OCI-LY7 (cell line): ENCODE measurements at regions of chr7 and their contacts with region 1.

Region 1: GRCh38 chr7:75688200-75689136 is 50.3 kb downstream of the HIP1 start:
- DNase-seq: peak; percentile 90
- H3K4me3 ChIP-seq: peak overlapping the region; percentile 60
- H3K27ac ChIP-seq: peak overlapping the region; percentile 92
- H3K4me1 ChIP-seq: peaks cover 72% of the 10 kb centered on the region
- CTCF ChIP-seq: no peak

Region 2: GRCh38 chr7:75559355-75559975 is 129.0 kb before region 1 on chr7:
- CTCF ChIA-PET with region 1: no interaction called
- POLR2A ChIA-PET with region 1: no interaction called
- intact Hi-C with region 1: no loop called
- DNase-seq: no peak
- H3K4me3 ChIP-seq: no peak overlapping the region
- H3K27ac ChIP-seq: no peak overlapping the region
- H3K4me1 ChIP-seq: no peaks in the 10 kb centered on the region
- CTCF ChIP-seq: no peak

Region 3: GRCh38 chr7:75624134-75624832 is 64.2 kb before region 1 on chr7:
- CTCF ChIA-PET with region 1: no interaction called
- POLR2A ChIA-PET with region 1: interaction called, 6 read pairs
- intact Hi-C with region 1: loop called (anchors 5 kb)
- DNase-seq: peak; percentile 42
- H3K4me3 ChIP-seq: no peak overlapping the region
- H3K27ac ChIP-seq: no peak overlapping the region
- H3K4me1 ChIP-seq: peaks cover 42% of the 10 kb centered on the region
- CTCF ChIP-seq: no peak

Region 4: DNA sequence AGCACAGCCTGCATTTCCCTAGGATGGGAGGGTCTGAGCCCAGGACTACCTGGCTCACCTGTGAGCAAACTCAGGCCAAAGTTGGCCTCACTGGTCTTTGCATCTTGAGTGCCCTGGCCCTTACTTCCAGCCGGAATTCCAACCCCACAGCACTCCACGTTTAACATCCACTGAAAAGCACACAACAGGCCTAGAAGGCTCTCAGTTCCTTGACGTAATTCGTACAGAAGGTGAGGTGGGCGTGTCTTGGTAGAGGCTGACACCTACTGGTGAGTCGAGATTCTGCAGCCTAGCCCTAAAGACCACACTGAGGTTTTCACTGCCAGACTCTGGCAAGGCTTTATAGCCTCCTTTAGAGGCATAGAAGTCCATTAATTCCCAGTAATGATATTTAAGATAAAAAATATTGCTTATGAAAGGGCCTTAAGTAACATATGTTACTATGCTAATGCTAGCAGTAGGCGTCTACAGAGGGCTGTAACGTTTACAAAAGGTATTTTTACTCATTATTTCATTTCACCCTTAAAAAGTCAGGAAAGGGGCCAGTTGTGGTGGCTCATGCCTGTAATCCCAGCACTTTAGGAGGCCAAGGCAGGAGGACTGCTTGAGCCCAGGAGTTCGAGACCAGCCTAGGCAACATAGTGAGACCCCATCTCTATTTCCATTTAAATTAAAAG is 45.5 kb before region 1 on chr7:
- CTCF ChIA-PET with region 1: no interaction called
- POLR2A ChIA-PET with region 1: no interaction called
- intact Hi-C with region 1: loop called (anchors 1 kb)
- DNase-seq: peak; percentile 74
- H3K4me3 ChIP-seq: no peak overlapping the region
- H3K27ac ChIP-seq: no peak overlapping the region
- H3K4me1 ChIP-seq: peaks cover 10% of the 10 kb centered on the region
- CTCF ChIP-seq: peak; percentile 88

Region 5: GRCh38 chr7:75662579-75663301 is 25.7 kb before region 1 on chr7:
- CTCF ChIA-PET with region 1: no interaction called
- POLR2A ChIA-PET with region 1: interaction called, 8 read pairs
- intact Hi-C with region 1: loop called (anchors 1 kb)
- DNase-seq: peak; percentile 91
- H3K4me3 ChIP-seq: peak overlapping the region; percentile 58
- H3K27ac ChIP-seq: peak overlapping the region; percentile 95
- H3K4me1 ChIP-seq: peaks cover 44% of the 10 kb centered on the region
- CTCF ChIP-seq: no peak

Region 6: DNA sequence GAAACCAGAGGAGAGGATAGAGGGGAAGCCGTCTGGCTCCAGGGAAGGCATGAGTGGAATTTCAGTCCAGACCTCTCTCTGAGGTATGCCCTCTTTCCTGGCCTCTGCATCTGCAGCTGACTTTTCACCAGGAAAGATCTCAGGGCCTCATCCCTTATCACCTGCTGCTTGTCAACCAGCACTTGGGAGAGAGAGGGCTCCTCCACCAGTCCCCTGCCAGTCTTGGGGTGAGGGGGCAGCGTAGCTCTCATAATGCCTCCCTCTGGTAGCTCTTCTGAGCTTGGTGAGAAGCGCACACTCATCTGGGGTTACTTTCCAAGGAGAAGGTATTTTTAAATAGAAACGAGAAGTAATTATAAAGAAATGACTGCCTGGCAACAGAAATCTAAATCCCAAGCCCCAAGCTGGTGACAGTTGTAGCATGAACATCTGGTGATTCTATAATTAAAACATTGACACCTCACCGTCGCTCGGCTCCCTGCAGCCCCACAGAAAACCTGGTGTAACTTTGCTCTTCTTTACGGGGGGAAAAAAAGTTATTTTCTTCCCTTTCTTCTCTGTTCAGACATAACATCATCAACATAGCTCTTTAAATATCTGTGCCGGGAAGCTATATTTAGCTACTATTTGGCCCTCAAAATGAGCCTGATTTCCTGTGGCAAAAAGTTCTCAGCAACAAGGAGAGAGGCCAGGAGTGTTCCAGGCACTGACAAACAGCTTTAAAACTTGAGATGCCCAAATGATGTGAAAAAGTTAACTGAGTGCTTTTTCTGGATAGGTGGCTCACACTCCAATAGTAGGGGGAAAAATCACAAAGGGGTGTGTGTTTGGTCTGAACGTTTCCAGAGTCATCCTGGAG is 23.4 kb after region 1 on chr7:
- CTCF ChIA-PET with region 1: no interaction called
- POLR2A ChIA-PET with region 1: interaction called, 11 read pairs
- intact Hi-C with region 1: no loop called
- DNase-seq: peak; percentile 86
- H3K4me3 ChIP-seq: peak overlapping the region; percentile 53
- H3K27ac ChIP-seq: peak overlapping the region; percentile 98
- H3K4me1 ChIP-seq: peaks cover 41% of the 10 kb centered on the region
- CTCF ChIP-seq: no peak

Region 7: DNA sequence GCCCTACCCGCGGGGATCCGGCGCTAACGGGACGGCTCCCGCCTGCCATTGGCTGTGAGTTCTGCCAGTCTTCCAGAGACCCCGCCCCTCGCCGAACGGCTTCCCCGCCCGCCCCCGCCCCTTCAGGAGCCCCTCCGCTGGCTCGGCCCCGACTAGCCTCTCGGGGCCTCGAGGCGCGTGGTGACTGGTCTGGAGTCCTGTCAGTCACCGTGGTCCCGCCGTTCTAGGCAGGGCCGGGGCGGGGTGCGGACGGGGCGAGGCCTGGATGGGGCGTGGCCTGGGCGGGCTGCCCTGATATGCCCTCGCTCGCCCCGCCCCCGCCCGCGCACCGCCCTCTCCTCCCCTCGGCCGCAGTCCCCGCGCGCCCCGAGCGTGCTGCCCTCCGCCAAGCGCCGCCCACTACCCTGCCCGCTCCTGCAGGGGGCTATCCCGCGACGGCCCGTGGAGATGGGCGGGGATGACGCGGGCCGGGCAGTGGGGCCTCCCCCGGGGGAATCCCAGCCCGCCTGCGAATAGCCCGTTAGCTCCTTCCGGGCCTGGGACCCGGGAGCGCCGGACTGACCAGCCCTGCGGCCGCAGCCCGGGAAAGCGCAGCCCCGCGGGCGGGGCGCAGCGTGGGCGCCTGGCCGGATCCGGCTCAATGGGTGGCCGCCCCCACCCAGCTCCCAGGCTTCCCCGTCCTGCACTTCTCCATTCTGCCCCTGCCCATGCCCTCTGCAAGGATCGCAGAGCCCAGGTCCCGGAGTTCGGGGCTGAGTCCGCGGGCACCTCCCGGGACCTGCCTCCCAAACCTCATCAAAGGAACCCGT is 50.7 kb after region 1 on chr7:
- CTCF ChIA-PET with region 1: no interaction called
- POLR2A ChIA-PET with region 1: interaction called, 3 read pairs
- intact Hi-C with region 1: loop called (anchors 1 kb)
- DNase-seq: peak; percentile 99
- H3K4me3 ChIP-seq: peak overlapping the region; percentile 82
- H3K27ac ChIP-seq: peak overlapping the region; percentile 90
- H3K4me1 ChIP-seq: peaks cover 63% of the 10 kb centered on the region
- CTCF ChIP-seq: no peak